ENCODE measurements at regions of chr20 and their contacts with region 1.

Region 1: GRCh38 chr20:22691369-22692118 is 107.2 kb upstream of the FOXA2 start:
- DNase-seq: peak; percentile 78
- CTCF ChIP-seq: peak; percentile 83

Region 2: GRCh38 chr20:23245553-23246181 is 554.1 kb after region 1 on chr20:
- in situ Hi-C with region 1: loop called (anchors 25 kb)
- DNase-seq: peak; percentile 83
- CTCF ChIP-seq: peak; percentile 75

Region 3: DNA sequence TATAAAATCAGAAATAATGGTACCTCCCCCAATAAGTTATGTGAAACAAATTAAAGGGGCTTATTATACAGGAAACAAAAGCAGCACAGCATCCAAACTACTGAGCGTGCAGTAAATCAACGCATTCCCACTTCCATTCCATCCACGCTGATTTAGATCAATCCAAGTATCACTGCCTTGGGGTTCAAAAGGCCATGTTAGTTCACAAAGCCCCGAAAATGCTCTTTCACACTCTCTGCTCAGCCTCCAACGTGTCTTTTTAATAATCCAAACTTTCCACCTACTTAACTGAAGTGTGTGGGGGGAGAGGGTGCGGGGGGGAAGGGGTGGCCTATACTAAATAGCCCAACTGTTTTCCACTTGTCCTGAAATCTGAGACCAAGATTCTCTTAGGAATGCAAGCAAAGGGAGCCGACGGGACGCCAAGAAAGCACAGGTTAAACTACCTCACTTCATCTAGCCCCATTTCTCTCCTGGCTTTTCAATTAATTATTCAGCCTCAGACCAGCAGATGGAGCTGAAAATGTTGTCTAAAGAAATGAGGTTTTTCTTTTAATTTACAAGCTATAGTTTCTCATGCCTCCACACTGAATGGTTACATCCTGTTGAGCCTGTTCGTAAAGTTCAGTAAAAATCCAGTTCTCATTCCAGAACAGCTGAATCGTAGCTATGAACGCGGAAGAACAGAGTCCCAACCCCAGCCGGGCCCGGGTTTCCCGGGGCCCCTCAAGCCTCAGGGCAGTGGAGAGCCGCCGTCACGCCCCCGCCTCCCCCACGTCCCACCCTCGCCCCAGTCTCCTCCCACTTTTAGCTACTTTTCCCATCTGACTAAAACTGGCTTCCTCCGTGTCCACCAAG is 658.0 kb after region 1 on chr20:
- in situ Hi-C with region 1: loop called (anchors 25 kb)
- DNase-seq: peak; percentile 77
- CTCF ChIP-seq: peak; percentile 29